Right ventricle myocardium superior (tissue), 1 donor: ENCODE measurements at regions of chr7 and their contacts with region 1.

Region 1: GRCh38 chr7:13067036-13067435 is 379.6 kb downstream of the ARL4A start:
- DNase-seq: no peak
- ATAC-seq: no peak

Region 2: DNA sequence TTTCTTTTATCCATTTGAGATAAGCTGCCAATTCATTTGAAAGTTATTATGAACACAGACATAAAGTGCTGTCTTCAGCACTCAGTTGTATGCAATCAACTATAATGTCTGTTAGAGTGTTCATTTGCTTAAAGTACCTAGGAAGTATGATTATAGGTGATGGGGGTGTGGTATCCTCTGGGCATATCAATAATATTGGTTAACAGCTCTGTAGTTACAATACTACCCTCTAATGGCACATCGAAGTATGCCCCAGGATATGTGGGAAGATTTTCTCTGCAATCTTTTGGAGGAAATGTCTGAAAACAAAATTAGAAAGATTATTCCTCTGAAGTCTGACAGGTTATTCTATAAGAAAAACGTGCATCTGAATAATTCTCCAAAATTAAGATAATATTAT is 50.1 kb after region 1 on chr7:
- intact Hi-C with region 1: loop called (anchors 10 kb)
- DNase-seq: no peak
- ATAC-seq: no peak